Activated T-helper 1 cell treated with anti-CD3 and anti-CD28 coated beads, Interleukin-12 subunit alpha, Interleukin-12 subunit beta, Interleukin-2, Interleukin-4 antibody, amounts not matched to agents 30 ng/mL and 10 ng/mL and 1 ng/mL, durations not matched to agents 14 hours and 24 hours and 36 hours (primary cell): ENCODE measurements at regions of chr17 and their contacts with region 1.

Region 1: DNA sequence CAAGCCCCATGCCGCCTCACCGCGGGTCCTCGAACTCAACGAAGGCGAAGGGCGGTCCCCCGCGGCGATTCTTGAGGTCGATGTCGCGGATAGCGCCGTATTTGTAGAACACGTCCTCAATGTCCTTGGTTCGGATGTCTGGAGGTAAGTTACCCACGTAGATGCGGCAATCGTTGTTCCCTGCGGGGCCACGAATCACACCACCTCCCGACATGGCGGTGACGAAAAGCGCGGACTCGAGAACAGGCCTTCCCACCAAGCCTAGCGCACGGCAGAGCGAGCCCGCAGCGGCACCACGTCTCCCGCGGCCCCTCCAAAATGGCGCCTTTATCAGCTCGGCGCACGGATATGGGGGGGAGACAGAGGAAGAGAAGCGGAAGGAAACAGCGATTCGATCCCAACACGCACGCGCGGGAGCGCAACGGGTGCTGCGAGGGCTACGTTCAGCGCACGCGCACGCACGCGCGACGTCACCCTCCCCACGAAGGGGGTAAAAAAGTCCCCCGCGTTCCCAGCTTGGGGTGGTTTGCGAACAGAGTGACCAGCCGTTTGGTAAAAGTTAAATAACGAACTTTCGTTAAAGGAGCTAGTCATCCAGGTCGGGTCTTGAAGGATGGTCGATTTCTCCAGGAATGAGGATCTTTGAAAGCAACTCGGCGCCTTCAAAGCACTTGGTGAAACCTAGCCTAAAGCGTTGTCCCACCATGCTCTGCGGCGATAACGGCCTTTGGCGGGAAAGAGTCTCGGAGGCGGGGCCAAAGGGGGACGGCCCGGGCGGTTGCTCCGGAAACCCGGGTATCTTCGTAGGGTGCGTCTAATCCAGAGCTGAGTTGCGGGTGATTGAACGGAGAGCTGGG is at the start of gene SRSF1:
- DNase-seq: peak; percentile 97
- H3K4me3 Mint-ChIP-seq: peak within 1 kb of the TSS; percentile 99
- H3K27ac Mint-ChIP-seq: peak within 1 kb of the TSS; percentile 99
- H3K4me1 Mint-ChIP-seq: peaks cover 61% of the 10 kb centered on the region
- H3K27me3 Mint-ChIP-seq: no peaks in the 10 kb centered on the region
- total RNA-seq, gene SRSF1: 491 and 498 TPM in 2 replicates

Region 2: DNA sequence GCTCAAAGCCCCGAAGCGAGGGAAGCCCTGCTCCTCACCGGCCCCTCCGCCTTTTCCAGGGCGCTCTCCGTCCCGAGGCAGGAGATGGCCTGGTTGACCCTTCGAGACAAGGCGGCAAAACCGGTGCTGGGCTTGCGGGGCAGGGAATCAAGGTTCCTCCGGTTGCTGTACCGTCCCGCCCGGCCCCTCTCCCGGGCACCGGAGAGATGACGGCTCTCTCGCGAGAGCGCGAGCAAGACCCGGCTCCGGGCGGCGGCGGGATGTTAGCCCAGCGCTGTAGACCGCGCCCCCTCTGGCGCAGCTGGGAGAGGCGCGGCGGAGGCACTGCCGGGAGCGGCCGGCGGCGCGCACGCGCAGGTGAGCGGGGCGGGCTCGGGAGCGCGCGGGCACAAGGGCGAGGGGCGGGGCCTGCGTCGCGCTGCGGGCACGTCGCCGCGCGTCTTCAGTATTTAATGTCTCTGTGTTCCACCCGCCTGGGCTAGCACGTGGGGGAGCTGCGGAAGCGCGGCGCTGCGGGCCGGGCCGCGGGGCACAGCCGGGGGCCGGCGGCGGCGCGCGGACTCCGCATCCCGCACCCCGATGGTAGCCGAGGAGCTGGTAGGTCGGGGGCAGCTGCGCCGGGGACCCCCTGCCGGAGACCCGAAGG is 922.2 kb before region 1 on chr17 and contains the start of gene AKAP1:
- intact Hi-C with region 1: loop called (anchors 1 kb)
- DNase-seq: peak; percentile 96
- H3K4me3 Mint-ChIP-seq: peak within 1 kb of the TSS; percentile 92
- H3K27ac Mint-ChIP-seq: peak within 1 kb of the TSS; percentile 87
- H3K4me1 Mint-ChIP-seq: peaks cover 28% of the 10 kb centered on the region
- H3K27me3 Mint-ChIP-seq: peaks cover 9% of the 10 kb centered on the region
- total RNA-seq, gene AKAP1: 53.8 and 59.9 TPM in 2 replicates

Region 3: GRCh38 chr17:57995076-57995956 is 11.8 kb before region 1 on chr17:
- intact Hi-C with region 1: loop called (anchors 1 kb)
- DNase-seq: peak; percentile 22
- H3K4me3 Mint-ChIP-seq: no peak overlapping the region
- H3K27ac Mint-ChIP-seq: no peak overlapping the region
- H3K4me1 Mint-ChIP-seq: peaks cover 58% of the 10 kb centered on the region
- H3K27me3 Mint-ChIP-seq: no peaks in the 10 kb centered on the region

Region 4: GRCh38 chr17:58028578-58028977 is 21.4 kb after region 1 on chr17:
- intact Hi-C with region 1: no loop called
- DNase-seq: no peak
- H3K4me3 Mint-ChIP-seq: no peak overlapping the region
- H3K27ac Mint-ChIP-seq: no peak overlapping the region
- H3K4me1 Mint-ChIP-seq: no peaks in the 10 kb centered on the region
- H3K27me3 Mint-ChIP-seq: peaks cover 32% of the 10 kb centered on the region

Region 5: DNA sequence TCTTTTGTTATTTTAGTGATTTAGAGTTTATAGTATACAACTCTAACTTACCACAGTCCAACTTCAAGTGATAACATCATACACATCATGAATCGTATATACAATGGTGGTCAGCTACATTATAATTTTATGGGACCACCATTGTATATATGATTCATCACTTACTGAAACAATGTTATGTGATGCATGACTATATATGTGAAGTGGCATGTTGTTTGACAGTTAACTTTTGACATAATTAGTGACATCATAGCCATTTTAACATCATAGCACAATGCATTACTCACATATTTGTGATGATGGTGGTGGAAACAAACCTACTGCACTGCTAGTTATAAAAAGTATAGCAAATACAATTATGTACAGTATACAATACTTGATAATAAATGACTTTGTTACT is 97.9 kb after region 1 on chr17:
- intact Hi-C with region 1: no loop called
- DNase-seq: no peak
- H3K4me3 Mint-ChIP-seq: no peak overlapping the region
- H3K27ac Mint-ChIP-seq: no peak overlapping the region
- H3K4me1 Mint-ChIP-seq: peaks cover under 1% of the 10 kb centered on the region
- H3K27me3 Mint-ChIP-seq: peaks cover 11% of the 10 kb centered on the region

Region 6: GRCh38 chr17:58156839-58157803 is 150.0 kb after region 1 on chr17:
- intact Hi-C with region 1: loop called (anchors 5 kb)
- DNase-seq: peak; percentile 43
- H3K4me3 Mint-ChIP-seq: peak overlapping the region; percentile 83
- H3K27ac Mint-ChIP-seq: peak overlapping the region; percentile 79
- H3K4me1 Mint-ChIP-seq: peaks cover 49% of the 10 kb centered on the region
- H3K27me3 Mint-ChIP-seq: peaks cover 15% of the 10 kb centered on the region

Region 7: DNA sequence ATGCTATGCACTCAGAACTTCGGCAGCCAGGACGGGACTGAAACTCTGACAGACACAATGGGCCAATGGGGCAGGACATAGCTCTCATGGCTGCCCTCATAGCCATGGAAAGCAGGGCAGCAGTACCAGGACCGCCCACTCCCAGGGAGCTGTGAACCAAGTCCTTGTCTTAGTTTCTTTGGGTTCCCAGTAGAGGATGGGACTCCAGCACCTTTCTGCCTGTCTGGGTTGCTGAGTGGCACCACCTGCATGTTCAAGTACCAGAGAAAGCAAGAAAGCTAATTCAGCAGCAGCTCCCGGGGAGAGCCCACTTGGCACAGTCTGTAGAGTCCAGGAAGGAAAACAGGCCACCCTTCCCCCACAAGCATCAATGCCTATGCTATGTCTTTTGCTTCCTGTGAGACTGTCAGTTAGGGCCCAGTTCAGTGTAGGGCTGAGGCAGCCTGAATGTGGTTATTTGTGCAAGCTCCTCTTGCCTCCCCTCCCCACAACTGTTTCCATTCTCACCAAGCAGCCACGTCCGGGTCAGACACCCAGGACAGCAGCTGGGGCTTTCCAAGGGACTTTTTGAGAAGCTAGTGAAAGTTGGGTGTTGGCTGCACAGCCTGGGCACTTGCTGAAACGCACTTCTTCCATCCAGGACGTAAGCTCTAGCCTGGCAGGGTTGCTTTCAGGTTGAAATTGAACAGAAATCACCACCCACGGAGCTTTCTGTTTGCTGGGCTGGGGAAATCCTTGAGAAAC is 337.1 kb after region 1 on chr17:
- intact Hi-C with region 1: loop called (anchors 5 kb)
- DNase-seq: peak; percentile 91
- H3K4me3 Mint-ChIP-seq: peak overlapping the region; percentile 100
- H3K27ac Mint-ChIP-seq: peak overlapping the region; percentile 98
- H3K4me1 Mint-ChIP-seq: peaks cover 80% of the 10 kb centered on the region
- H3K27me3 Mint-ChIP-seq: peaks cover 2% of the 10 kb centered on the region